Activated naive CD4-positive, alpha-beta T cell treated with anti-CD3 and anti-CD28 coated beads for 36 hours (primary cell): ENCODE measurements at regions of chr18 and their contacts with region 1.

Region 1: DNA sequence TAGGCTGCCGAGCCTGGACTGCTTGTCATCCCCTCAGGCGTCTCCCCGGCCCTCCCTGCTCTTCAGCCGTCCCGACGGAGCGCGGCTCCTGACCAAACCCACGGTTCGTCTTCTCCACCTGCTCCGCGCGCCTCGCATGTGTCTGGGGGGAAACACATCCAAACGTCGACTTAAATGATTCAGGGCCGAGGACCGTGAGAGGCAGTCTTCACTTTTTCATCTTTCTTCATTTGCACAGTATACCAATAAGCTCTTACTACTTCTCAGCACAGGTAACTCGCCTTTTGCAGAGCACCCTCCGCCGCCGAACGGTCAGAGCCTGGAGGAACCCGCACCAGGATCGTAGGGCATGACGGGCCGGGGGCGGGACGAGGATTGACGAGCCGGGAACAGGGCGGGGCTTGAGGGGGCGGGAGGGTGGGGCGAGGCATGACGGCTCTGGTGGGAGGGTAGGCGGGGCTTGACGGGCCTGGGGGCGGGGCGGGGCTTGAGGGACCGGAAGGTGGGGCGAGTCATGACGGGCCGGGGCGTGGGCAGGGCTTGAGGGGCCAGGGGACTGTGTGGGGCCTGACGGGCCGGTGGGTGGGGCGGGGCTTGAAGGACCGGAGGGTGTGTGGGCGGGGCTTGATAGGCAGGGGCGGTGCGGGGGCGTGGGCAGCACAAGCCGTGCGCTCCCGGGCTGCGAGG is at the start of gene SEH1L:
- DNase-seq: peak; percentile 100
- H3K4me3 Mint-ChIP-seq: peak within 1 kb of the TSS; percentile 99
- H3K27ac Mint-ChIP-seq: peak within 1 kb of the TSS; percentile 97
- H3K4me1 Mint-ChIP-seq: peaks cover 40% of the 10 kb centered on the region
- H3K27me3 Mint-ChIP-seq: no peaks in the 10 kb centered on the region
- total RNA-seq, gene SEH1L: 82.6 to 85.4 TPM

Region 2: GRCh38 chr18:11851146-11851805 is 1096.2 kb before region 1 on chr18 and contains the start of gene CHMP1B:
- CTCF ChIA-PET with region 1: no interaction called
- intact Hi-C with region 1: loop called (anchors 5 kb)
- DNase-seq: peak; percentile 98
- H3K4me3 Mint-ChIP-seq: peak within 1 kb of the TSS; percentile 100
- H3K27ac Mint-ChIP-seq: peak within 1 kb of the TSS; percentile 100
- H3K4me1 Mint-ChIP-seq: peaks cover 31% of the 10 kb centered on the region
- H3K27me3 Mint-ChIP-seq: no peaks in the 10 kb centered on the region
- total RNA-seq, gene CHMP1B: 23.2 TPM

Region 3: DNA sequence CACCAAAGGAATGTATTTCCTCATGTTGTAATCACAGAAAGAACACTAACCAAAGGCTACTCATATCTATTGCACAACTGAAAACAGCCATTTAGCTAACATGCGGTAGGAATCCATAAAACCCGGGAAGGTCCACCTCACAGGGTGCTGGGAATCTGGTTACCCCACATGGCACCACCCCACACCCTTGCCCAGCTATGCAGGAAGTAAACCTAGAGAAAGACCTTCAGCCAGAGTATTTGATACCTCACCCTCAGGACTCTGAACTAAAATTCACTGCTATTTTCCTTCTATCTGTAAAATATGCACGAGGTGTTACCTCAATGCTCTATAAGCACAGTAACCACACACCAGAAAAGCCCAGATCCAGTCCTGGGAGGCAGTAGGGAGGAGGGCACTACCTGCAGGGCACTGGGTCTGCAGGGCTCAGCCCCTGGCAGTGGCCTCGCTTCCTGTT is 109.3 kb before region 1 on chr18:
- CTCF ChIA-PET with region 1: no interaction called
- intact Hi-C with region 1: loop called (anchors 1 kb)
- DNase-seq: no peak
- H3K4me3 Mint-ChIP-seq: peak overlapping the region; percentile 46
- H3K27ac Mint-ChIP-seq: peak overlapping the region; percentile 84
- H3K4me1 Mint-ChIP-seq: peaks cover 52% of the 10 kb centered on the region
- H3K27me3 Mint-ChIP-seq: no peaks in the 10 kb centered on the region

Region 4: DNA sequence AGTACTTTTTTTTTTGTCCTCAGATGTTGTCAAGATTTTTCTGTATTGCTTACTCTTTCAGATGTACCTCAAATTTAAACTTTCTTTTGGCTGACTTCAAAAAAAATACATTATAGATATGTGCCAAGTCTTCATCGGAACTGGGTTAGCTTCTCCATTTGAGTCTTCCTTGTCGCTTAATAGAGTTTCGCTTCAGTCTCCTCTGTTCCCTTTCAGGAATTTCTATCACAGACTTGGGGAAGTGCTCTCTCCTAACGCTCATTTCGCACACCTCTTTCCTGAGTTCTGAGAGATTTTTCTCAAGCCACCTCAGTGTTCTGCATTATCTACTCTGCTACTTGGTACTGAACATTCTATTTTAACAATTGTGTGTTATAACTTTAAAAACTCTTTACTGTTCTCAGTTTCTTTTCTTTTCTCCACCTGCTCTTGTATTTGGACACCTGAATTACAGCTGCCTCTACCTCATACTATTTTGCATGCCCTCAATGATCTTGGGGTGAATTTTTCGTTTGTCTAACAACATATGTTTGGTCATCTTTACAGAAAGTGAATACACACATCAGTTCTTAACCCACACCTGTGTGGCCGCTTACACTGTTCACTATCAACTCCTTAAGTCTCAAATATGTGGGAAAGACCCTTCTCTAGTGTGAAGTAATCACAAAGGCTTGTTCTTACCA is 79.9 kb before region 1 on chr18:
- CTCF ChIA-PET with region 1: no interaction called
- intact Hi-C with region 1: no loop called
- DNase-seq: no peak
- H3K4me3 Mint-ChIP-seq: no peak overlapping the region
- H3K27ac Mint-ChIP-seq: no peak overlapping the region
- H3K4me1 Mint-ChIP-seq: peaks cover 31% of the 10 kb centered on the region
- H3K27me3 Mint-ChIP-seq: no peaks in the 10 kb centered on the region

Region 5: DNA sequence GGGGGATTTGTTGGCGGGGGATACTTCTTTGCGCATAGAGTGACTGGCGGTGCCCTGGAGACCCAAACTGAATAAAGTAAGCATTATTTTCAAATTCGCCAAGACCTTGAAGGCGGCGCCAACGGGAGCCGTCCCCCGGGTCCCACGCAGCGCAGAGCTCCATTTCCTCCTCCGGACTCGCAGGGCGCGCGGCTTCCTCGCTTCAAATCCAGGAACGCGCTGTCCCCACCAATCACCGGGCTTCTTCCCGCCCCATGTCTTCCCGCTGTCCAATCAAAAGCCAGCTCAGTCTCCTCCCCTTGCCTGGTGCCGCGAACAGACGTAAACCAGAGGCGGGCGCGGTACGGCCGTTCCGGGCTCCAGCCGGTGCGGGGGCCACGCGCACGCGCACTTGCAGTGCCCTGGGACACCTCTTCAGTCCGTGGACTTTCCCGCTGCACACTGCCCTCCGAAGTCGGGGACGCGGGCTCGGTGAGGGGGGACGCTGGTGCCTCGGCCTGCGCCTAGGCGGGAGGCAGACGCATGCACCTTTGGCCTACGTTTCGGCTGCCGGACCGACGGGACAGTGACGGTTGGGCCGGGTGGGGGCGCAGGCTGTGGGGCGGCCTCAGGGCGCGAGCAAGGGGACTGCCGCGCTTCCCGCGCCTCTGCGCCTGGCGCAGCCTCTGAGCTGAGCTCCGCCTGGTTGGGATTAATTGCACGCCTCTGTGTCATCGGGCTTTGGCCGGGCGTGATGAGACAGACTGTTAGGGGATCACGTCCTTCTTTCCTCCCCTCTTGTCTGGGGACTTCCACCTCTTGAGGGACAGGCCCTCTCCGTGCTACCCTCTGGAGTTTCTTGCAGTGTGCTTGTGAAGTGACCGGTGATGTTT is 43.7 kb after region 1 on chr18 and contains the start of gene CEP192:
- CTCF ChIA-PET with region 1: no interaction called
- intact Hi-C with region 1: loop called (anchors 1 kb)
- DNase-seq: peak; percentile 99
- H3K4me3 Mint-ChIP-seq: peak within 1 kb of the TSS; percentile 99
- H3K27ac Mint-ChIP-seq: peak within 1 kb of the TSS; percentile 97
- H3K4me1 Mint-ChIP-seq: peaks cover 10% of the 10 kb centered on the region
- H3K27me3 Mint-ChIP-seq: no peaks in the 10 kb centered on the region
- total RNA-seq, gene CEP192: 32.7 to 33.6 TPM

Region 6: GRCh38 chr18:13036622-13037320 is 89.3 kb after region 1 on chr18:
- CTCF ChIA-PET with region 1: no interaction called
- intact Hi-C with region 1: no loop called
- DNase-seq: no peak
- H3K4me3 Mint-ChIP-seq: no peak overlapping the region
- H3K27ac Mint-ChIP-seq: no peak overlapping the region
- H3K4me1 Mint-ChIP-seq: no peaks in the 10 kb centered on the region
- H3K27me3 Mint-ChIP-seq: no peaks in the 10 kb centered on the region

Region 7: GRCh38 chr18:13268158-13269012 is 320.9 kb after region 1 on chr18:
- CTCF ChIA-PET with region 1: no interaction called
- intact Hi-C with region 1: loop called (anchors 5 kb)
- DNase-seq: no peak
- H3K4me3 Mint-ChIP-seq: no peak overlapping the region
- H3K27ac Mint-ChIP-seq: no peak overlapping the region
- H3K4me1 Mint-ChIP-seq: peaks cover 71% of the 10 kb centered on the region
- H3K27me3 Mint-ChIP-seq: no peaks in the 10 kb centered on the region

Region 8: DNA sequence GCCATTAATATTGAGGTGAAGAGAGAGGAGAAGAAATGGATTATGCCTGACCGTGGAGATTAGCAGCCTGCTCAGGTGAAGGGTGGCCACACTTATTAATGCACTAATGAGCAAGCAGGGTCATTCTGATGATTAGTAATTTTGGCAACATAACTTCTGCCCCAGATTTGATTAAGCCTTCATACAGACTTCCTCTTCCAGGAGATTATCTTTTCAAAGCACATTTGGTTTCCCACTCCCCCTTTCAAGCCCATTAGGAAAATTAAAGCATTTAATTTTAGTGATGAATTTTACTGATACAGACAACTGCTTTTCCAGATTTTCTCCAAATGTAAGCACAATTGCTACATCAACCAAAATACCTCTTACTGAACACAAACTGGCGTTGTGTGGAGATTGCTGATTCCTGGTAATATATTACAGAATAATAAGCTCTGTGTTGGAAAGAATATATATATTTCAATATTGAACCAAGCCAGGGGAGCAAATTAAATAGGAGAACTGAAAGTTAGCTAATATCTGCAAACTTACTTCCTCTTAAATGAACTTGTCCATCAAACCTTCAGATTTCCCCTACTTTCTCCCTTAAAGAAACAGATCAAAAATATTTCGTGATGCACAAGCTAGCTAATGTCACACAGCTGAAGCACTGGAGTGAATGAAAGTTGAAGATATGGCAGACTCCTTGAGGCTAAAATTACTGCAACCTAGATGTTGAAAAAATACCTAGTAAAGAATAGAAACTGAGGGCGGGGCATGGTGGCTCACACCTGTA is 638.1 kb after region 1 on chr18:
- CTCF ChIA-PET with region 1: no interaction called
- intact Hi-C with region 1: no loop called
- DNase-seq: no peak
- H3K4me3 Mint-ChIP-seq: no peak overlapping the region
- H3K27ac Mint-ChIP-seq: no peak overlapping the region
- H3K4me1 Mint-ChIP-seq: peaks cover 44% of the 10 kb centered on the region
- H3K27me3 Mint-ChIP-seq: no peaks in the 10 kb centered on the region

Region 9: DNA sequence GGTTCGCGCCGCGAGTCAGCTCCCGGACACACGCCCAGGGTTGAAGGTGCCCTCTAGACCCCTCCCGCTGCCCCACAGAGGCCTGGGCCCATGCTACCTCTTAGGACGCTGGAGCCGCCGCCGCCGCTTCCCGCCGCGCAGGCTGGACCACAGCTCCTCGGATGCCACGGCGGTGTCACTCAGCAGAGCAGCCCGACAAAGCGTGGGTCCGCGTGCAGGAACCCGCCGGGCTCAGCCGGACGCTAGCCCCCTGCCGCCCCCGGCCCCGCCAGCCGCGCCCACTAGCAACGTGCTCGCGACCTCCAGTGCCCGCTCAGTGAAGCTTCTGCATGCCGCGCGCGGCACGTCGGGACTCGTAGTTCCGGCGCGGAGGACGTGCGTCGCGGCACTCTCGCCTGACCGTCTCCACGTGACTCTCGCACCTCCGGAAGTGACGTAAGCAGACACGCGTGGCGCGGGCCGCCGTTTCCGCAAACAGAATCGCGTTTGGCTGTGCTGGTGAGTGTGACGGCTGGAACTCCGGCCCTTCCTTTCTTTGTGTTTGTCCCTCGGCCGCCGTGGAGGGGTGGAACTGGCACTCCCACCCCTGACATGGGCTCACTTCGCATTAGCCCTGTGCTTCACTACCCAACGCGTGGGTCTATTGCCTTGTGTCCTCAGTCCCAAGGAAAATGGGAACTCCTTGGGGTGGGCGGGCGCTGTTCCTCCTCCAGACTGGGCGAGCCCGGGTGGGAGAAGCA is 778.9 kb after region 1 on chr18 and contains the starts of genes FAM210A and RNMT:
- CTCF ChIA-PET with region 1: no interaction called
- intact Hi-C with region 1: loop called (anchors 1 kb)
- DNase-seq: peak; percentile 96
- H3K4me3 Mint-ChIP-seq: peak within 1 kb of the TSS; percentile 91
- H3K27ac Mint-ChIP-seq: peak within 1 kb of the TSS; percentile 89
- H3K4me1 Mint-ChIP-seq: peaks cover 46% of the 10 kb centered on the region
- H3K27me3 Mint-ChIP-seq: no peaks in the 10 kb centered on the region
- total RNA-seq, gene FAM210A: 18.6 to 20.2 TPM
- total RNA-seq, gene RNMT: 25.2 to 27.4 TPM

Region 10: DNA sequence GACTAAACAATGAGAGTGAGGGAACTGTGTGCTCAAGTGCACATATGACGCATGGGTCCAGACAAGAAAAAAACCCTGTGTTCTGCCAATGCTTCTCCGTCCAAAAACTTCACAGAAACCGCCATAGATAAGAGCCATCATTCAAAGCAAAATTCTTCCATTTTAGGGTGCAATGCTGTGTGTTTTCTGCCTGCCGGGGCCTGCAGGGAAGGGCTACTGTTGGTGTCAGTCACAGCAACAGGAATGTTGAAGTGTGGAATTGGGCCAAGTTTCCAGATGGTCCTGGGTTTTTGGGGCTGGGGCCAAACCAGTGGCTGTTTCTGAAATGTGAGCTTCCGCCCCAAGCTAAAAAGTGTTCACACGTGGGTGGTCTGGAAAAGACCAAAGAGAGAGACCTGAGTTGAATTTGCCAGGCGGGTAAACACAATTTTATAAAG is 968.5 kb after region 1 on chr18:
- CTCF ChIA-PET with region 1: no interaction called
- intact Hi-C with region 1: no loop called
- DNase-seq: no peak
- H3K4me3 Mint-ChIP-seq: no peak overlapping the region
- H3K27ac Mint-ChIP-seq: no peak overlapping the region
- H3K4me1 Mint-ChIP-seq: no peaks in the 10 kb centered on the region
- H3K27me3 Mint-ChIP-seq: no peaks in the 10 kb centered on the region